Naive thymus-derived CD4-positive, alpha-beta T cell (primary cell): ENCODE measurements at regions of chr5 and their contacts with region 1.

Region 1: DNA sequence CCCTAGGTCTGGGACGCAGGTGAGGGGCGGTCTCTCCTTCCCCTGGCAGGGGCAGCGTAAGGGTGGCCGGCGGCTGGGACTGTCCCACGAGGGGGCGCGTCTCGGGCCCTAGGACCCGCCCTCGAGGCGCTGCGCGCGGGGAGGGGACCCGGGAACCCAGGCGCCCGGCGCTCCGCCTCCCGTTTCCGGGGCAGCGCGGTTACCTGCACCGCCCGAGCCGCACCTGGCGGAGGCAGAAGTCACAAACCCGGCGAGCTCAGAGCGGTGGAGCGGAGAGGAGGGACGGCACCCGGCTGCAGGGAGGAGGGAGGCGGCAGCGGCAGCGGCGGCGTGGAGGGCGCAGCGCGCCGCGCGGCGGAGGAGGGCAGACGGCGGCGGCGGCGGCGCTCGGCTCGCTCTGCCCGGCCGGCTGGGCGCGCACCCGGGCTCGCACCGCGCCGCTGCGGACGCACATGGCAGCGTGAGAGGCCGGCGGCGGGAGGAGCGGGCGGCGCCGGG is at the start of gene WWC1:
- DNase-seq: peak in 8 of 9 donors; percentile 15 to 67 (median 55)
- ATAC-seq: peak; percentile 95
- H3K4me3 ChIP-seq: no peak within 1 kb of the TSS
- H3K4me3 Mint-ChIP-seq: peak within 1 kb of the TSS in 9 of 10 donors; percentile 35 to 82 (median 72)
- H3K27ac ChIP-seq: no peak within 1 kb of the TSS
- H3K27ac Mint-ChIP-seq: no peak within 1 kb of the TSS
- H3K4me1 ChIP-seq: no peaks in the 10 kb centered on the region
- H3K4me1 Mint-ChIP-seq: peaks cover 3 to 21% (median 17%) of the 10 kb centered on the region in 7 donors
- H3K27me3 ChIP-seq: peaks cover 0 to 6% of the 10 kb centered on the region in 2 donors
- H3K27me3 Mint-ChIP-seq: peaks cover 0 to 62% (median 45%) of the 10 kb centered on the region in 5 donors
- total RNA-seq, gene WWC1: 0.56 to 1.4 (median 0.86) TPM in 4 of 5 experiments, not detected in the other

Region 2: DNA sequence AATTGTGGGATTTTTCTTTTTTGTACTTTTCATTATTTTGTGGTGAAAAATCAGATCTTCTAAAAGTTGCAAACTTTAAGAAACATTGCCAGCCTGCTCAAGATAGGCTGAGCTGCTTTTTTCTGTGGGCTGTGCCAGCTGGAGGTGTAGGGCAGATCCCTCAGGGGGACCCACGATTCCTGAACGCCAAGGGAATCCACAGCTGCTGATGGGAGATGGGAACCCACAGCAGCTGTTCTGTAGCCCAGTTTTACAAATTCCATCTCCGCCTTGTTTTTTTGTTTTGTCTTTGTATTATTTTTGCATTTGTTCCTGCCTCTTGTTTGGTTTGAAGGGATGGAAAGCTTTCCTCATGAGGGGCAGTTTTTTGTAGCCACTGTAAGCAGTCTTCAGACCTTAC is 90.9 kb after region 1 on chr5:
- CTCF ChIA-PET with region 1: no interaction called
- POLR2A ChIA-PET with region 1: no interaction called
- intact Hi-C with region 1: loop called in 1 of 2 experiments (anchors 10 kb)
- DNase-seq: no peak
- ATAC-seq: no peak
- H3K4me3 ChIP-seq: no peak overlapping the region
- H3K4me3 Mint-ChIP-seq: peak overlapping the region in 3 of 10 donors; percentile 19 to 57 (median 34)
- H3K27ac ChIP-seq: no peak overlapping the region
- H3K27ac Mint-ChIP-seq: peak overlapping the region in 3 of 9 donors; percentile 16 to 59 (median 26)
- H3K4me1 ChIP-seq: no peaks in the 10 kb centered on the region
- H3K4me1 Mint-ChIP-seq: peaks cover 0 to 19% (median 13%) of the 10 kb centered on the region in 7 donors
- H3K27me3 ChIP-seq: no peaks in the 10 kb centered on the region
- H3K27me3 Mint-ChIP-seq: no peaks in the 10 kb centered on the region

Region 3: DNA sequence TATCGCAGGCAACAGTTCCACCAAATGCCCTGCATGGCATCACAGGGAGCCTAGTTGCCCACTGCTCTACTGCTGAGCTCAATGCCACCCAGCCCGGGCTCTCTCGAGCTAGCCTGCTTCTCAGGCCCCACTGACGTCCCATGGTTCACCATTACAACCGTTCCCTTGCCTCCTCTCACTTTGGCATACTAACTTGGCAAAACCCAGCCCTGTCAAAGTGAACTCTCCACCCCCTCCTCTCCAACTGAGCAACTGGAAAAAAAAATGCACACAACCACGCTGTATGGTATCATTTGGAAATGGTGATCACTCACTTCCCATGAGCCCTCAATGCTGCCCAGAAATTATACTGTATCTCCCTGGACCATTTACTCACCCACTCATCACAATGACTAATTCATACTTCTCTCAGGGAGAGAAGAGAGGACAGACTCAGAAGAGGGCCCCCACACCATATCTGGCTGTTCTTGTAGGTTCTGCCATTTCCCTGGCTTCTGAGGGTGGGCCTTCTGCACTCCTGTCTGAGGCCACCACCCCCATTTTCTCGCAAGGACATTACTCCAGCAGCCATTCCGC is 143.3 kb after region 1 on chr5:
- CTCF ChIA-PET with region 1: no interaction called
- POLR2A ChIA-PET with region 1: no interaction called
- intact Hi-C with region 1: loop called in 1 of 2 experiments (anchors 5 kb)
- DNase-seq: no peak
- ATAC-seq: no peak
- H3K4me3 ChIP-seq: no peak overlapping the region
- H3K4me3 Mint-ChIP-seq: no peak overlapping the region
- H3K27ac ChIP-seq: no peak overlapping the region
- H3K27ac Mint-ChIP-seq: no peak overlapping the region
- H3K4me1 ChIP-seq: no peaks in the 10 kb centered on the region
- H3K4me1 Mint-ChIP-seq: no peaks in the 10 kb centered on the region
- H3K27me3 ChIP-seq: no peaks in the 10 kb centered on the region
- H3K27me3 Mint-ChIP-seq: peaks cover 0 to 25% (median 0%) of the 10 kb centered on the region in 5 donors

Region 4: DNA sequence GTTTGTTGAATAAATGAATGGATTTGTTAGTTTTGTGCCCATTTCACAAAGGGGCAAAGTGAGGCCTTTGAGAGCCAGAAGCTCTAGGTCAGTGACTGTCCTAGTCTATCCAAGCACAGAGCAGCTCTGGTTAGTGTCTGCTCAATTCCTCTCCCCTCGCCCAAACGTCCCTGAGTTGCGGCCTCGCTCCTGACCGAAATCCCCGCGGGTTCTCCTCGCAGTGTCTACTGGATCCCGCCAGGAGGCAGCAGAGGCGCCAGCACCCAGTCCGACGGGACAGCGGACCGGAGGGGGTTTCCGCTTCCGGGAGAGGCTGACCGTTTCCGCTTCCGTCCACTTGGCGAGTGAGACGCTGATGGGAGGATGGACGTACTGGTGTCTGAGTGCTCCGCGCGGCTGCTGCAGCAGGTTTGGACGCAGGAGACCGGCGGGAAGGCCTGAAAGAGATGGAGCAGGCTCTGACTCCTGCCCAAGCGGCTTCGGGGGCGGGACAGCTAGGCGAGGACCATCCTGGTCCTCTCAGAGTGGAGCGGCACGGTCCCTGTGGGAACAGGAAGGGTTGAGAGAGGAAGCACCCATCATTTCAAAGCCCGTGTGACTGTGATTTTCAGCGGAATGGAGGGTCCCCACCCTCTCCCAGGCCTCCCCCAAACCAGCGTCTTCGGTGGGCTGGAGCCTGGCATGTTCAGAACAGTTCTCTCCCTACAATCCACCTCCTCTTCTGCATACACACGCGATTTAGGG is 194.8 kb after region 1 on chr5 and contains the start of gene RARS1:
- CTCF ChIA-PET with region 1: no interaction called
- POLR2A ChIA-PET with region 1: no interaction called
- intact Hi-C with region 1: loop called in 1 of 2 experiments (anchors 2 kb)
- DNase-seq: peak; percentile 65 to 89 (median 76)
- ATAC-seq: peak; percentile 98
- H3K4me3 ChIP-seq: peak within 1 kb of the TSS; percentile 93
- H3K4me3 Mint-ChIP-seq: peak within 1 kb of the TSS; percentile 96 to 100 (median 99)
- H3K27ac ChIP-seq: peak within 1 kb of the TSS; percentile 73
- H3K27ac Mint-ChIP-seq: peak within 1 kb of the TSS; percentile 88 to 96 (median 92)
- H3K4me1 ChIP-seq: peaks cover 7% of the 10 kb centered on the region in 2 donors
- H3K4me1 Mint-ChIP-seq: peaks cover 30 to 52% (median 44%) of the 10 kb centered on the region in 7 donors
- H3K27me3 ChIP-seq: no peaks in the 10 kb centered on the region
- H3K27me3 Mint-ChIP-seq: peaks cover 0 to 3% (median 0%) of the 10 kb centered on the region in 5 donors
- total RNA-seq, gene RARS1: 59.1 to 110 (median 81.3) TPM